ENCODE measurements at regions of chr9 and their contacts with region 1.

Region 1: GRCh38 chr9:95769473-95769872 is 106.0 kb upstream of the ERCC6L2 start:
- DNase-seq: no peak
- ATAC-seq: no peak

Region 2: GRCh38 chr9:95750725-95751517 is 18.6 kb before region 1 on chr9:
- intact Hi-C with region 1: no loop called
- DNase-seq: peak; percentile 43
- ATAC-seq: no peak

Region 3: DNA sequence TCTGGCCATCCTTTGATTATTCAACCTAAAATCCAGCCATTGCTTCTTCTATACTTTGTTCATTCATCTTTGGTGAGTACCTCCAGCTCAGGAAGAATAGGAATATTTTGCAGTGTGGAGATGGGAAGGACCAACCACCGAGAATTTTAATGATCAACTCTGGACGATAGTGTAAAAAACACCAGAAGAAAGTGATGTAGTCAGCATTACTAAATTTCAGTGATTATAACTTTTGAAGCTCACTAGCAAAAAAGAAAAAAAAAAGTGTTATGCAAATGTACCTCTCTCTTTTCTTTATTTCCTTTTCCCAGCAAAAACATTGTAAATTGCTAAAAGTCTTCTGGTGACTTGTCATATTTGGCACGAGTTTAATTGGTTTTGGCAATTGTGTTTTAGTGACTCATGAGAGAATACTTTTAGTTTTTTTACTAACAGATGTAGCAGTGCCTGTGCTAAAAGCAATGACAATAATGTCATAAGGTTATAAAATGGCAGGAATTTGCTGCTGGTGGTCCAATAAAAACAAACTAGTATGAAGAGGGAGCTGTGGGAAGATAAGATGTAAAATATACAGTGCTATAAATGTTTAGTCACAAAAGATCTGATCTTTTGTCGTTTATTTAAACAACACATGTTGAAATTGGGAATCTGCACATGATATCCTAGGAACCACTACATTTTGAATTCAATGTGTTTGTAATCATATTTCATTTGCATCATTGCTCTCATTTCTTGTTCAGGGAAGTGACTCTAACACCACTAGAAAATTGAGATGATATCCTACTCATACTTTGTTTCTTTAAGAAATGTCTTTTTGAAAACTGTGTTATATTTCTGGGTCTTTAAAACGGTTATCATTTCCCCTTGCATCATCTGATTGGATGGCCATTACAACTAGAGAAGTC is 24.7 kb after region 1 on chr9:
- intact Hi-C with region 1: loop called (anchors 1 kb)
- DNase-seq: no peak
- ATAC-seq: peak; percentile 92

Region 4: DNA sequence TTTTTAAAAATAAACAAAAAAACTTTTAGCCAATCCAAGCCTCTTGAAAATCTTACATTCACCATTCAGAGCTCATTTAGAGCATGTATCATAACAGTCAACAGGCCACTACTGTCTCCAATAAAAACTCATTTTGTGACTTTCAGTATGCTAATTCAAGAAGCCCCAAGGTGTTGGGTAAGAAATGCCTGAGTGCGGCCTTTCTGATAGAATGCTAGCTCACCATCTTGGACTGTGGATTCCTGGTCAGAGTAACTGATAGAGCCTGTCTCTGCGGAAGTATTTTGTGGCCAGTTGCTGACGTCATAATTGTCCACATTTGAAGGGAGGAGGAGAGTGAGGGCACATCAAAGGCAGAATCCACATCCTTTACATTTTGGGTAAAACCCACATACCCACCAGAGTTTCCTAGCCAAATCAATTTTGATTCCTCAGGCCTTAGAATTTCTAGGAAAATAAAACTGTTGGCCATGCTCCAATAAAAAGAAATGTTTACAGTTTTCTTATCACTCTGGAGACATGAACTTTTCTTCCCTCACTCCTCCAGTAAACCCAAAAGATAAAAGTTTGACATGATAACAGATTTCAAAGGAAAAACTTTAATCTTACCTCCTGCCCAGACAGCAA is 64.9 kb after region 1 on chr9:
- intact Hi-C with region 1: no loop called
- DNase-seq: no peak
- ATAC-seq: peak; percentile 56